ENCODE measurements at regions of chr2 and their contacts with region 1.

Region 1: DNA sequence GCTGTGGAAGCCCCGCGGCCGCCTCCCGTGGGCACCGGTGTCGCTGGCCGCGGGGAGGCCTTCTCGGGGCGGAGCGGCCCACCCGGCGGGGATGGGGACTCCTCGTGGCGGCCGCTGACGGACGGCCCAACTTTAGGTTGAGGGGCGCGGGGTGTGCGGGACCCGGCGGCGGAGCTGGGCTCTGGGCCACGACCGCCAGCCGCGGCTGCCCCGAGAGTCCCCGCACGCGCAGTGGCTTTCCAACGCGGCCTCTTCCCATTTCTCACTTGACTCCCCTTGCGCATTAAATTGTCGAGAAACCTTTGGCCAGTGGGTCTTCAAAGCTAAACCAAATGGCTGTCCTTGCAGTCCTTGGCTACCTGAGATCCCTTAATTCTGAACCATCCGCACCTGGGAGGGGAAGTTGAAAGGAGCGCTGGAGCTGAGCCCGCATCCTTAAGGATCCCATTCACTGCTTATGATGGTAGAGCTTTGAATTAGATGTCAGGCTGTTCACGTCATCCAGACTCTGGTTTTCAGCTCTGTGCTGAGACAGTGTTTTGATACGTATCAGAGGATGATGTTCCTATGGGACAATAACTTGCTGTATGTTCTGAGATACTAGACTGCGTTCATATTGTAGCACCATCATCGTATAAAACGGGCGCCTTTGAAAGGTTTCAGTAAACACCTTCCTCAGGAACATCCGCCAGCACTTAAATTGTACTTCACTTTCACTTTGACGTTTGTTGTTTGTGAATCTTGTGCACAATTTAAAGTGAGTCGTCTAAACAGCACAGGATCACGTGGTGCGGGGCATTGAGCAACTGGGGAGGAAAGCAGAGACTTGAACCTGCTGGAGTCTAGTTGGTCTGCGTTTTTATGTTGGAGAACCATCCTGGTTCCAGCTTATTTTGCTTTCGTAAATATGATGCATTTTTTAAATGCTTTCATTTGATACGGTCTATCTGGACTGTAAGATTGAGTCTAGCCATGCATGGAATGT is 874 bp downstream of the CLIP4 start:
- DNase-seq: peak; percentile 39 to 82 (median 75)
- ATAC-seq: peak; percentile 62
- H3K4me3 ChIP-seq: peak overlapping the region; percentile 75
- H3K4me3 Mint-ChIP-seq: peak overlapping the region; percentile 86 to 98 (median 88)
- H3K27ac ChIP-seq: peak overlapping the region; percentile 73
- H3K27ac Mint-ChIP-seq: peak overlapping the region; percentile 87 to 99 (median 97)
- H3K4me1 ChIP-seq: peaks cover 8 to 20% of the 10 kb centered on the region in 2 donors
- H3K4me1 Mint-ChIP-seq: peaks cover 23 to 61% (median 55%) of the 10 kb centered on the region in 7 donors
- H3K27me3 ChIP-seq: no peaks in the 10 kb centered on the region
- H3K27me3 Mint-ChIP-seq: peaks cover 0 to 12% (median 0%) of the 10 kb centered on the region in 5 donors

Region 2: DNA sequence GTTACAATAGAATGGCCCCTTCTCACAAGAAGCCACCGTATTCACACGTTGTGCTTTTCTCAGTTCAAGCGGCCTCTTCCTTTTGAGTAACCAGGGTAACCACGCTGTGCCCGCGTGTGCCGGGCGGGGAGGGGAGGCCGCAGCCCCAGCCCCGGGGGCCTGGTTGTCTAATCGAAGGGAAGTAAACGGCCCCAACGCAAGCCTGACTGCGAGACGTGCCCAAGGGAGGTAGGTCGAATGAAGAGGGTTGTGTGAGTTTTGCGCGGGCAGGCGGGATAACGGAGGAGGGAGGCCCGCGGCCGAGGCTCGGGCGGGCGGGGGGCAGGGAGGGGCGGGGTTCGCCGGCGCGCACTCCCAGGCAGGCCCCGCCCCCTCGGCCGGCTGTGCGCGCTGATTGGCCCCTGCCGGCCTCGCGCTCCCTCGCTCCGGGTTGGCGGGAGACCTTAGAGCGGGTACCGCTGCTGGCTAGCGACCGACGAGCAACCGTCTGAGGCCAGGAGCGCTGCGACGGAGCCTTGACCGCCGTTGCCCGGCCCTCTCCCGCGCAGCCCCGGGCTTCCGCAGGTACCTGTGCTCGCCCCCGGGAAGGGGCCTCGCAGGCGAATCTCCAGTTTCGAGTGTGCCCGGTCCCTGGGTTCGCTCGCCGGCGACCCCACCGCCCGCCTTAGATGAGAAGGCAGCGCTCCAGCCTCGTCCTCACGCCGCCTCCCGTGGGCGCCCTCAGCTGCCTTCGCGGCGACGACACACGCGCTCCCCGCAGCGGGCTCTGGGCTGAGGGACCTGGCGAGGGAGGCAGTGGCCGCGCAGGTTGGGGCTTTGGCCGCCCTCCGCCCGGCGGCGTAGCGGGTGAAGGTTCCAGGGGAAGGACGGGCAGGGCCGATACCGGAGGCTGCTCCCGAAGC is 305.5 kb before region 1 on chr2 and contains the start of gene SPDYA:
- CTCF ChIA-PET with region 1: no interaction called
- POLR2A ChIA-PET with region 1: no interaction called
- intact Hi-C with region 1: loop called in 1 of 2 experiments (anchors 10 kb)
- DNase-seq: peak; percentile 65 to 88 (median 77)
- ATAC-seq: peak; percentile 96
- H3K4me3 ChIP-seq: peak within 1 kb of the TSS; percentile 63
- H3K4me3 Mint-ChIP-seq: peak within 1 kb of the TSS; percentile 76 to 94 (median 84)
- H3K27ac ChIP-seq: peak within 1 kb of the TSS; percentile 50
- H3K27ac Mint-ChIP-seq: peak within 1 kb of the TSS; percentile 11 to 73 (median 59)
- H3K4me1 ChIP-seq: peaks cover 5 to 9% of the 10 kb centered on the region in 2 donors
- H3K4me1 Mint-ChIP-seq: peaks cover 7 to 23% (median 16%) of the 10 kb centered on the region in 7 donors
- H3K27me3 ChIP-seq: no peaks in the 10 kb centered on the region
- H3K27me3 Mint-ChIP-seq: peaks cover 0 to 8% (median 0%) of the 10 kb centered on the region in 5 donors
- total RNA-seq, gene SPDYA: 1.3 to 9.8 (median 4.6) TPM

Region 3: GRCh38 chr2:28894470-28895177 is 221.5 kb before region 1 on chr2 and contains the start of gene WDR43:
- CTCF ChIA-PET with region 1: no interaction called
- POLR2A ChIA-PET with region 1: no interaction called
- intact Hi-C with region 1: loop called (anchors 1 to 10 kb)
- DNase-seq: peak; percentile 97 to 100 (median 99)
- ATAC-seq: peak; percentile 100
- H3K4me3 ChIP-seq: peak within 1 kb of the TSS; percentile 88
- H3K4me3 Mint-ChIP-seq: peak within 1 kb of the TSS; percentile 91 to 99 (median 98)
- H3K27ac ChIP-seq: peak within 1 kb of the TSS; percentile 78
- H3K27ac Mint-ChIP-seq: peak within 1 kb of the TSS; percentile 91 to 99 (median 94)
- H3K4me1 ChIP-seq: peaks cover 28% of the 10 kb centered on the region in 2 donors
- H3K4me1 Mint-ChIP-seq: peaks cover 31 to 49% (median 43%) of the 10 kb centered on the region in 7 donors
- H3K27me3 ChIP-seq: no peaks in the 10 kb centered on the region
- H3K27me3 Mint-ChIP-seq: peaks cover 0 to 2% (median 0%) of the 10 kb centered on the region in 5 donors
- total RNA-seq, gene WDR43: 49.6 to 75.0 (median 63.9) TPM

Region 4: GRCh38 chr2:29130295-29130694 is 14.2 kb after region 1 on chr2:
- CTCF ChIA-PET with region 1: no interaction called
- POLR2A ChIA-PET with region 1: interaction called, 7 read pairs
- intact Hi-C with region 1: loop called in 1 of 2 experiments (anchors 2 kb)
- DNase-seq: no peak
- ATAC-seq: no peak
- H3K4me3 ChIP-seq: no peak overlapping the region
- H3K4me3 Mint-ChIP-seq: peak overlapping the region in 1 of 10 donors; percentile 24
- H3K27ac ChIP-seq: no peak overlapping the region
- H3K27ac Mint-ChIP-seq: peak overlapping the region in 2 of 9 donors; percentile 14 to 38
- H3K4me1 ChIP-seq: no peaks in the 10 kb centered on the region
- H3K4me1 Mint-ChIP-seq: peaks cover 7 to 27% (median 17%) of the 10 kb centered on the region in 7 donors
- H3K27me3 ChIP-seq: no peaks in the 10 kb centered on the region
- H3K27me3 Mint-ChIP-seq: no peaks in the 10 kb centered on the region

Region 5: GRCh38 chr2:29314816-29315571 is 198.9 kb after region 1 on chr2:
- CTCF ChIA-PET with region 1: no interaction called
- POLR2A ChIA-PET with region 1: no interaction called
- intact Hi-C with region 1: loop called in 1 of 2 experiments (anchors 1 kb)
- DNase-seq: peak; percentile 19 to 59 (median 45)
- ATAC-seq: peak; percentile 82
- H3K4me3 ChIP-seq: peak overlapping the region; percentile 17
- H3K4me3 Mint-ChIP-seq: peak overlapping the region; percentile 70 to 83 (median 77)
- H3K27ac ChIP-seq: no peak overlapping the region
- H3K27ac Mint-ChIP-seq: peak overlapping the region in 5 of 9 donors; percentile 16 to 67 (median 38)
- H3K4me1 ChIP-seq: peaks cover 10 to 15% of the 10 kb centered on the region in 2 donors
- H3K4me1 Mint-ChIP-seq: peaks cover 17 to 52% (median 26%) of the 10 kb centered on the region in 7 donors
- H3K27me3 ChIP-seq: no peaks in the 10 kb centered on the region
- H3K27me3 Mint-ChIP-seq: peaks cover 12 to 39% (median 30%) of the 10 kb centered on the region in 5 donors